Naive thymus-derived CD4-positive, alpha-beta T cell (primary cell): ENCODE measurements at regions of chr15 and their contacts with region 1.

Region 1: GRCh38 chr15:49046220-49047102 is at the start of gene SECISBP2L:
- DNase-seq: peak; percentile 73 to 92 (median 91)
- ATAC-seq: peak; percentile 98
- H3K4me3 ChIP-seq: peak within 1 kb of the TSS; percentile 86
- H3K4me3 Mint-ChIP-seq: peak within 1 kb of the TSS; percentile 96 to 99 (median 98)
- H3K27ac ChIP-seq: peak within 1 kb of the TSS; percentile 82
- H3K27ac Mint-ChIP-seq: peak within 1 kb of the TSS; percentile 91 to 97 (median 93)
- H3K4me1 ChIP-seq: peaks cover 16 to 18% of the 10 kb centered on the region in 2 donors
- H3K4me1 Mint-ChIP-seq: peaks cover 23 to 41% (median 34%) of the 10 kb centered on the region in 7 donors
- H3K27me3 ChIP-seq: no peaks in the 10 kb centered on the region
- H3K27me3 Mint-ChIP-seq: no peaks in the 10 kb centered on the region
- total RNA-seq, gene SECISBP2L: 39.3 to 75.8 (median 55.8) TPM

Region 2: DNA sequence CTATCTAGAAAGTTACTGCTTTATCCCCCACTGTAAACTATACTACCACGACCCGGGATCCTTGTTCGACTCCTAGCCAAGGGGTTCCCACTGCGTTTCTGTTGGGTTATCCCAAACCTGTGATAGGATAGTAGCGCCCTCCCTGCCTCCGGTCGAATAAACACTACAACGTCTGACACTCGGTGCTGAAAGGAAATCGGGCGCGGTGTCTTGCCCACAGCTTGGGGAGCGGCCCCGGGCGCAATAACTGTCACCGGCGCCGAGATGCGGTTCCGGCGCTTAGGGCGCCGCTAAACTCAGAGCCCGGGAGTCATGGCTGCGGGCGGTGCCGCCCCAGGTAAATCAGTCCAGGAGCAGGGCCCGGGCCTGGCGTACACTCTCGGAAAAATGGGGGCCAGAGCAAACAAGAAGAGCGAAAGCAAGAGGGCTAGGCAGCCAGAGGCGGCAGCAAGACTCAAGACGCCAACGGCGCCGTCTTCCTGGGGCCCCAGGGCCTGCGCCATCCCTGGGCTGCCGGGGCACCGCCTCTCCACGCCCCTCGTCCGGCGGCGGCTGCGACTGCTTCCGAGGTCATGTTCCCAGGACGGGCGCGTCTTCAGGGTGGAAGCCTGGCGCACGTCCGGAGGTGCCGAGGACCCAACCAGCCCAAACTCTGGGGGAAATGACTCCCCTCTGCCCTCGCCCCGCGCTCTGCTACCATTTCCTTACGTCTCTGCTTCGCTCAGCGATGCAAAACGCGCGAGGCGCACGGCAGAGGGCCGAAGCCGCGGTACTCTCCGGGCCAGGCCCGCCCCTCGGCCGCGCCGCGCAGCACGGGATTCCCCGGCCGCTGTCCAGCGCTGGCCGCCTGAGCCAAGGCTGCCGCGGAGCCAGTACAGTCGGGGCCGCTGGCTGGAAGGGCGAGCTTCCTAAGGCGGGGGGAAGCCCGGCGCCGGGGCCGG is 715.3 kb before region 1 on chr15 and contains the start of gene DUT:
- CTCF ChIA-PET with region 1: no interaction called
- POLR2A ChIA-PET with region 1: no interaction called
- intact Hi-C with region 1: loop called (anchors 1 to 2 kb)
- DNase-seq: peak; percentile 65 to 85 (median 79)
- ATAC-seq: peak; percentile 87
- H3K4me3 ChIP-seq: peak within 1 kb of the TSS; percentile 87
- H3K4me3 Mint-ChIP-seq: peak within 1 kb of the TSS; percentile 94 to 100 (median 98)
- H3K27ac ChIP-seq: peak within 1 kb of the TSS; percentile 93
- H3K27ac Mint-ChIP-seq: peak within 1 kb of the TSS; percentile 94 to 100 (median 99)
- H3K4me1 ChIP-seq: peaks cover 12 to 13% of the 10 kb centered on the region in 2 donors
- H3K4me1 Mint-ChIP-seq: peaks cover 13 to 46% (median 24%) of the 10 kb centered on the region in 7 donors
- H3K27me3 ChIP-seq: no peaks in the 10 kb centered on the region
- H3K27me3 Mint-ChIP-seq: peaks cover 0 to 2% (median 0%) of the 10 kb centered on the region in 5 donors
- total RNA-seq, gene DUT: 54.7 to 219 (median 116) TPM

Region 3: DNA sequence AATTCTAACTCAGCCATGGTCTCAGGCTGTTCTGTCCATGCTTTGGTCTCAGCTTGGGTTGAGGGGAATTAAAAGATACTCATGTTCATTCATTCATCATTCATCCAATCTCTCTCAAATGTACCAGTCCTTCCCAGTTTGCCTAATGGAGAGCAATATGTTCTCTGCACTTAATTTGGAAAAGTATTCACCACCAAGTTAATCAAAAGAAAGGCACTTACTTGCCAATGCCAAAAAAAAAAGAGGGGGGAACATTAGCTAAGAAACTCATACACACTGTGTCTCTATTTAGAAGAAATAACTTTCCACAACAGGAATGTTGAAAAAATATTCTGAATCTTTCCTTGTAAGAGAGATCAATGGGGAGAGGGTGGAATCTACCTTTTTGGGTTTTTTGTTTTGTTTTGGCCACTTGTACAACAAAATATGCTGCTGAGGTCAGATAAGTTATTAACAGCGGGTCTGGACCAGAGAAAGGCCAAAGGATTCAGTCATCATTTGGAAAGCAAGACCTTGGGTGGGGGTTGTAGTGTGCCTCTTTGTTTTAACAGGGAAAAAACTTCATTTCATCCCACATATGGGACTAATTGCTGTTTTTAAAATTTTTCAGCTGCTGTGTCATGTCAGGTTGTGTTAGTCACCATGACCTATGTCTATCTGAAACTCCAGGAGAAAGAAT is 553.2 kb before region 1 on chr15:
- CTCF ChIA-PET with region 1: no interaction called
- POLR2A ChIA-PET with region 1: no interaction called
- intact Hi-C with region 1: no loop called
- DNase-seq: no peak
- ATAC-seq: no peak
- H3K4me3 ChIP-seq: no peak overlapping the region
- H3K4me3 Mint-ChIP-seq: no peak overlapping the region
- H3K27ac ChIP-seq: no peak overlapping the region
- H3K27ac Mint-ChIP-seq: no peak overlapping the region
- H3K4me1 ChIP-seq: no peaks in the 10 kb centered on the region
- H3K4me1 Mint-ChIP-seq: no peaks in the 10 kb centered on the region
- H3K27me3 ChIP-seq: no peaks in the 10 kb centered on the region
- H3K27me3 Mint-ChIP-seq: no peaks in the 10 kb centered on the region

Region 4: DNA sequence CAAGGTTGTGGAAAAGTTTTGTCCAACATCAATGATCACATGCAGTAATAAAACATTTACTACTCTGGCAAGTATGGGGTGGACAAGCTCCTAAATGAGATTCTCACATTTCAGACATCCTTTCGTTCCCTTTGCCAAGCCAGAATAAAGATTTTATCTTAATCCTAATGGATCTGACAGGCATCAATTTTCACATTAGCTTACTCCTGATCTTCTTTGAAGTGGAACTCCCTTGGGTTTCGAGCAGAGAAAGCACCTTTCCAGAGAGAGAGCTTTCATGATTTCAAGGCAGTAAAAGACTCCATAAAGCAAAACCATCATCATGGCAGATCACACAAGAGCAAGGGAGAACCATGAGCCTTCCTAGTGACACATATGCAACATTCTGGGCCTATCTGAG is 195.8 kb before region 1 on chr15:
- CTCF ChIA-PET with region 1: no interaction called
- POLR2A ChIA-PET with region 1: no interaction called
- intact Hi-C with region 1: no loop called
- DNase-seq: no peak
- ATAC-seq: no peak
- H3K4me3 ChIP-seq: no peak overlapping the region
- H3K4me3 Mint-ChIP-seq: no peak overlapping the region
- H3K27ac ChIP-seq: no peak overlapping the region
- H3K27ac Mint-ChIP-seq: no peak overlapping the region
- H3K4me1 ChIP-seq: no peaks in the 10 kb centered on the region
- H3K4me1 Mint-ChIP-seq: peaks cover 0 to 2% (median 0%) of the 10 kb centered on the region in 7 donors
- H3K27me3 ChIP-seq: no peaks in the 10 kb centered on the region
- H3K27me3 Mint-ChIP-seq: peaks cover 10 to 32% (median 24%) of the 10 kb centered on the region in 5 donors

Region 5: DNA sequence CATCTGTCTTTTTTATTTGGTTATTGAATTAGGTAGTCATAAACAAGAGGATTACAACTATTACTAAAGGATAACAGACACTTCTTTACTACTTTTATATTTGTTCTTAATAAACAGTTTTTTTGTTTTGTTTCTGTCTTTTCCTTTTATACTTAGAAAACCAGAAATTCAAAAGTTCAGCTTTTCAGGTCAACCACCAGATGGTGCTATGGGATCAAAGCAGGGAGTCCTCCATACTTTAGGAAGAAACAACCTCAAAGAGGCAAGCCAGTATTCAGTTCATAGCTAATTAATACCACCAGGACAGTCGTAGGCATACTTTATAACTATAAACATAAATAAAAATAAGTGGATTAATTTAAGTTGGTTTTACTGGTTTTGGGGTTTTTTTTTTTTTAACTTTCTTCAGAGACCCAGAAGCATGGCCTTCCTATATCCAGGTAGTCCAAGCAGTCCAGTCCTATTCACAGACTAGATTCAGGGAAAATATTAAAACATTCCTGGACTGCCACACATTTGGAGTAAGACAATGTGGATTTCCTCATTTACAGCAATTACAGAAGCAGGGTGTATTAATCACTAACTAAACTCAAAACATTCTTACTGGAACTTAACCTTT is 184.5 kb before region 1 on chr15:
- CTCF ChIA-PET with region 1: no interaction called
- POLR2A ChIA-PET with region 1: no interaction called
- intact Hi-C with region 1: loop called in 1 of 2 experiments (anchors 5 kb)
- DNase-seq: peak in 7 of 9 donors; percentile 45 to 75 (median 66)
- ATAC-seq: peak; percentile 80
- H3K4me3 ChIP-seq: no peak overlapping the region
- H3K4me3 Mint-ChIP-seq: no peak overlapping the region
- H3K27ac ChIP-seq: no peak overlapping the region
- H3K27ac Mint-ChIP-seq: no peak overlapping the region
- H3K4me1 ChIP-seq: no peaks in the 10 kb centered on the region
- H3K4me1 Mint-ChIP-seq: peaks cover 0 to 13% (median 3%) of the 10 kb centered on the region in 7 donors
- H3K27me3 ChIP-seq: no peaks in the 10 kb centered on the region
- H3K27me3 Mint-ChIP-seq: peaks cover 2 to 21% (median 7%) of the 10 kb centered on the region in 5 donors

Region 6: GRCh38 chr15:49101536-49101935 is 55.1 kb after region 1 on chr15:
- CTCF ChIA-PET with region 1: interaction called, 3 read pairs
- POLR2A ChIA-PET with region 1: no interaction called
- intact Hi-C with region 1: loop called in 1 of 2 experiments (anchors 5 kb)
- DNase-seq: no peak
- ATAC-seq: no peak
- H3K4me3 ChIP-seq: no peak overlapping the region
- H3K4me3 Mint-ChIP-seq: no peak overlapping the region
- H3K27ac ChIP-seq: no peak overlapping the region
- H3K27ac Mint-ChIP-seq: no peak overlapping the region
- H3K4me1 ChIP-seq: no peaks in the 10 kb centered on the region
- H3K4me1 Mint-ChIP-seq: peaks cover 0 to 5% (median 3%) of the 10 kb centered on the region in 7 donors
- H3K27me3 ChIP-seq: no peaks in the 10 kb centered on the region
- H3K27me3 Mint-ChIP-seq: no peaks in the 10 kb centered on the region

Region 7: GRCh38 chr15:49145651-49146609 is 99.5 kb after region 1 on chr15:
- CTCF ChIA-PET with region 1: interaction called, 5 read pairs
- POLR2A ChIA-PET with region 1: no interaction called
- intact Hi-C with region 1: loop called in 1 of 2 experiments (anchors 1 kb)
- DNase-seq: peak in 6 of 9 donors; percentile 18 to 49 (median 28)
- ATAC-seq: peak; percentile 76
- H3K4me3 ChIP-seq: no peak overlapping the region
- H3K4me3 Mint-ChIP-seq: peak overlapping the region in 1 of 10 donors; percentile 44
- H3K27ac ChIP-seq: no peak overlapping the region
- H3K27ac Mint-ChIP-seq: peak overlapping the region in 4 of 9 donors; percentile 1 to 63 (median 42)
- H3K4me1 ChIP-seq: peaks cover 8 to 14% of the 10 kb centered on the region in 2 donors
- H3K4me1 Mint-ChIP-seq: peaks cover 22 to 74% (median 50%) of the 10 kb centered on the region in 7 donors
- H3K27me3 ChIP-seq: no peaks in the 10 kb centered on the region
- H3K27me3 Mint-ChIP-seq: no peaks in the 10 kb centered on the region

Region 8: GRCh38 chr15:49169880-49170597 is 123.6 kb after region 1 on chr15 and contains the start of gene GALK2:
- CTCF ChIA-PET with region 1: no interaction called
- POLR2A ChIA-PET with region 1: interaction called, 8 read pairs
- intact Hi-C with region 1: loop called in 1 of 2 experiments (anchors 1 kb)
- DNase-seq: peak; percentile 42 to 90 (median 75)
- ATAC-seq: peak; percentile 96
- H3K4me3 ChIP-seq: peak within 1 kb of the TSS; percentile 88
- H3K4me3 Mint-ChIP-seq: peak within 1 kb of the TSS; percentile 91 to 100 (median 98)
- H3K27ac ChIP-seq: peak within 1 kb of the TSS; percentile 88
- H3K27ac Mint-ChIP-seq: peak within 1 kb of the TSS; percentile 94 to 99 (median 98)
- H3K4me1 ChIP-seq: peaks cover 4 to 14% of the 10 kb centered on the region in 2 donors
- H3K4me1 Mint-ChIP-seq: peaks cover 24 to 56% (median 46%) of the 10 kb centered on the region in 7 donors
- H3K27me3 ChIP-seq: no peaks in the 10 kb centered on the region
- H3K27me3 Mint-ChIP-seq: no peaks in the 10 kb centered on the region
- total RNA-seq, gene GALK2: 19.4 to 36.6 (median 28.7) TPM

Region 9: DNA sequence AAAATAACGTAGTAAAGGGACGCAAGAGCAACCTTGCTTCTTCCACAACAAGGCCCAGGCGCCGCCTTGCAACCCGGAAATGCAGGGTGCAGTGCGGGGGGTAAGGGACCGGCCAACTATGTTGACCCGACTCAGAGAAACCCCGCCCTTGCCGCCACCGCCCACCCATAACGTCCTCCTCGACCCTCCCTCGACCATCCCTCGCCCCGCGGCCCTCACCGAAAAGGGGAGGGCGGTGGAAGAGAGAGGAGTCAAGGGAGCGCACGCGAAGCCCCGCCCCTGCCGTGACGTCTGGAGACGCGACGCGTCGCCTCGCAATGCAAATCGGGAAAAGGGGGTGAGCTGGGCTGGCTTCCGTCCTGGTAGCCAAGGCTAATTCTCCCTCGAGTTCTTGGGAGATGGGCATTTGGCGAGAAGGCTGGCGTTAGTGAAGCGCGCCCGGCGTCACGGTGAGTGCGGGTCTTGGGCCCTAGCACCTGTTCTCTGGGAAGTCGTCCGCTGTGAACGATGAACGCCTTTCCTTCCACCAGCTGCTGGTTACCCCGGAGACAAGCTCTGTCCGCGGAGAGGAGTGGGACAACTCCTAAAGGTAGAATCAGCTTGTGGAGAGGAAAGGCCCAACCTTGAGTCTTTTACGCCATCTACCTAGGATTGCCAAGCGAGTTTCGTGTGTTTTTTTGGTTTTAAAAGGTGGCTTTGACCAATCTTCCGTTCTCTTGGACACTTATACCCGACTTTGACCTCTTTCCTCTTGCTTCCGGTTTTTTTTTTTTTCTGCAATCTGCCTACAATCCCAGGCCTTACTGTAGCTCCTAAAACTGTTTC is 1377.8 kb after region 1 on chr15 and contains the start of gene USP8:
- CTCF ChIA-PET with region 1: no interaction called
- POLR2A ChIA-PET with region 1: no interaction called
- intact Hi-C with region 1: loop called in 1 of 2 experiments (anchors 2 kb)
- DNase-seq: peak; percentile 88 to 95 (median 93)
- ATAC-seq: peak; percentile 98
- H3K4me3 ChIP-seq: peak within 1 kb of the TSS; percentile 91
- H3K4me3 Mint-ChIP-seq: peak within 1 kb of the TSS; percentile 86 to 100 (median 98)
- H3K27ac ChIP-seq: peak within 1 kb of the TSS; percentile 93
- H3K27ac Mint-ChIP-seq: peak within 1 kb of the TSS; percentile 91 to 99 (median 97)
- H3K4me1 ChIP-seq: peaks cover 8 to 20% of the 10 kb centered on the region in 2 donors
- H3K4me1 Mint-ChIP-seq: peaks cover 23 to 59% (median 34%) of the 10 kb centered on the region in 7 donors
- H3K27me3 ChIP-seq: no peaks in the 10 kb centered on the region
- H3K27me3 Mint-ChIP-seq: no peaks in the 10 kb centered on the region
- total RNA-seq, gene USP8: 52.8 to 61.8 (median 57.1) TPM